WTC11 (cell line): ENCODE measurements at regions of chr10 and their contacts with region 1.

Region 1: GRCh38 chr10:109883859-109884771 is 39.2 kb downstream of the XPNPEP1 start:
- DNase-seq: peak; percentile 84
- ATAC-seq: peak; percentile 94
- H3K4me3 Mint-ChIP-seq: peak overlapping the region; percentile 42
- H3K27ac Mint-ChIP-seq: peak overlapping the region; percentile 94
- H3K4me1 Mint-ChIP-seq: peaks cover 12% of the 10 kb centered on the region
- H3K27me3 Mint-ChIP-seq: no peaks in the 10 kb centered on the region; the same call in 1 of the 2 replicates
- CTCF ChIP-seq: peak; percentile 88

Region 2: GRCh38 chr10:108147346-108147745 is 1736.8 kb before region 1 on chr10:
- CTCF ChIA-PET with region 1: no interaction called
- POLR2A ChIA-PET with region 1: no interaction called
- DNase-seq: no peak
- ATAC-seq: no peak
- H3K4me3 Mint-ChIP-seq: no peak overlapping the region
- H3K27ac Mint-ChIP-seq: no peak overlapping the region
- H3K4me1 Mint-ChIP-seq: peaks cover 17% of the 10 kb centered on the region
- H3K27me3 Mint-ChIP-seq: no peaks in the 10 kb centered on the region; the same call in 1 of the 2 replicates
- CTCF ChIP-seq: no peak

Region 3: GRCh38 chr10:109556399-109556798 is 327.7 kb before region 1 on chr10:
- CTCF ChIA-PET with region 1: no interaction called
- POLR2A ChIA-PET with region 1: no interaction called
- DNase-seq: no peak
- ATAC-seq: peak; percentile 85
- H3K4me3 Mint-ChIP-seq: no peak overlapping the region
- H3K27ac Mint-ChIP-seq: no peak overlapping the region; the same call in 1 of the 2 replicates
- H3K4me1 Mint-ChIP-seq: peaks cover 6% of the 10 kb centered on the region
- H3K27me3 Mint-ChIP-seq: no peaks in the 10 kb centered on the region
- CTCF ChIP-seq: no peak

Region 4: DNA sequence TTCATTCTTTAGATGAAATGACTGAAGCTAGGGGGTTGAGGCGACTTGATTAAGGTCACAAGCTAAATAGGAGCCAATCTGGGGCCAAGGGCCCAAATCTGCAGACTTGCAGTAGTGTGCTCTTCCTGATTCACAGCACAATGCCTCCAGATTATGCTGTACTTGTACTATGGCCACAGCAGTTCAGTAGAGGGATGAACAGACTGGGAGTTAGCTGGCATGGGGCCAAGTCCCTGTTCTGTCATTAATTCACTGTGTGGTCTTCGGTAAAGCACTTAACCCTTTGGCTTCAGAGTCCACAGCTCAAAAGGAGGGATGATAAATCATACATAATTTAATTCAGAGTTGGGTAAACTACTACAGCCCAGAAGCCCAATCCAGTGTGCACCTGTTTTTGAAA is 157.6 kb before region 1 on chr10:
- CTCF ChIA-PET with region 1: no interaction called
- POLR2A ChIA-PET with region 1: no interaction called
- DNase-seq: no peak
- ATAC-seq: no peak
- H3K4me3 Mint-ChIP-seq: no peak overlapping the region
- H3K27ac Mint-ChIP-seq: no peak overlapping the region
- H3K4me1 Mint-ChIP-seq: no peaks in the 10 kb centered on the region
- H3K27me3 Mint-ChIP-seq: no peaks in the 10 kb centered on the region
- CTCF ChIP-seq: no peak

Region 5: GRCh38 chr10:109914966-109915365 is 30.9 kb after region 1 on chr10:
- CTCF ChIA-PET with region 1: interaction called, 12 read pairs
- POLR2A ChIA-PET with region 1: no interaction called
- DNase-seq: no peak
- ATAC-seq: no peak
- H3K4me3 Mint-ChIP-seq: no peak overlapping the region
- H3K27ac Mint-ChIP-seq: no peak overlapping the region
- H3K4me1 Mint-ChIP-seq: peaks cover 39% of the 10 kb centered on the region
- H3K27me3 Mint-ChIP-seq: no peaks in the 10 kb centered on the region
- CTCF ChIP-seq: no peak

Region 6: DNA sequence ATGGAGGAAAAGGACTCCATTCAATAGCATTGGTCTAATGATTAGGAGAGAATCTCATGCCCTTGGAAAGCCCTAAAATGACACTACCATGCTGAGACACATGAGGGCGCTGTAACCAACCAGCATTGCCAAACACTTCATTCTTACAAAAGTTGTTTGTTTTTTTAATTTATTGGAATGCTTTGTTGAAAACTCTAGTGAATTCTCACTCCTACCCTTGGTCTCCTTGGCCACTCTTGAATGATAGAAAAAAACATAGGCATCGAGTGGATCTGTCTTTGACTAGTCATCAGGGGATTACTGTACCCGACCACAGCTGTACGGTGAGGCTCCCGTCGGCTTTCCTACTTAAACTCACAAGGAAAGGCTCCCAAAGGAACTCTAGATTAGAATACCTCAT is 94.4 kb after region 1 on chr10:
- CTCF ChIA-PET with region 1: interaction called, 71 read pairs
- POLR2A ChIA-PET with region 1: no interaction called
- DNase-seq: peak; percentile 74
- ATAC-seq: peak; percentile 79
- H3K4me3 Mint-ChIP-seq: no peak overlapping the region
- H3K27ac Mint-ChIP-seq: no peak overlapping the region
- H3K4me1 Mint-ChIP-seq: peaks cover 39% of the 10 kb centered on the region
- H3K27me3 Mint-ChIP-seq: no peaks in the 10 kb centered on the region
- CTCF ChIP-seq: peak; percentile 80

Region 7: GRCh38 chr10:110016039-110016438 is 131.9 kb after region 1 on chr10:
- CTCF ChIA-PET with region 1: interaction called, 46 read pairs
- POLR2A ChIA-PET with region 1: no interaction called
- DNase-seq: no peak
- ATAC-seq: peak; percentile 85
- H3K4me3 Mint-ChIP-seq: no peak overlapping the region
- H3K27ac Mint-ChIP-seq: peak overlapping the region; percentile 75
- H3K4me1 Mint-ChIP-seq: peaks cover 48% of the 10 kb centered on the region
- H3K27me3 Mint-ChIP-seq: no peaks in the 10 kb centered on the region
- CTCF ChIP-seq: no peak

Region 8: DNA sequence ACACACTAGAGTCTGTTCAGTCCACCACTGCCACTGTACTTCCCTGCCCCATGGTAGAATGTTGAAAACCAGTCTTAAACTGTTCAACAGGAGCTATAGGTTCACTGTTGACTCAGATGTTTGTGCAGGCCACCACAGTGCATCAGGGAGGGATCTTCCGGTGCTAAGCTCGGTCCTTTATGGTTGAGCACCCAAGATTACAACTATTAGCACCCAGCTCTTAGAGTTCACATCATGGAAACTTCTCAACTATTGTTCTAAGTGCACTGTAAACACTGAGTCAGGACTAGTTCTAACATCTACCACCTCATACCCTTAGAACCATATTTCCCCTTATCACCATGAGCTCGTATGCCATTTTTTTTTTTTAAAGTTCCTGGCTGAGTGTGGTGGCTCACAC is 226.2 kb after region 1 on chr10:
- CTCF ChIA-PET with region 1: interaction called, 15 read pairs
- POLR2A ChIA-PET with region 1: no interaction called
- DNase-seq: no peak
- ATAC-seq: no peak
- H3K4me3 Mint-ChIP-seq: no peak overlapping the region
- H3K27ac Mint-ChIP-seq: 0 out of 2 replicates have a peak overlapping the region, but pooled peaks have one; percentile 44
- H3K4me1 Mint-ChIP-seq: no peaks in the 10 kb centered on the region
- H3K27me3 Mint-ChIP-seq: no peaks in the 10 kb centered on the region
- CTCF ChIP-seq: no peak

Region 9: DNA sequence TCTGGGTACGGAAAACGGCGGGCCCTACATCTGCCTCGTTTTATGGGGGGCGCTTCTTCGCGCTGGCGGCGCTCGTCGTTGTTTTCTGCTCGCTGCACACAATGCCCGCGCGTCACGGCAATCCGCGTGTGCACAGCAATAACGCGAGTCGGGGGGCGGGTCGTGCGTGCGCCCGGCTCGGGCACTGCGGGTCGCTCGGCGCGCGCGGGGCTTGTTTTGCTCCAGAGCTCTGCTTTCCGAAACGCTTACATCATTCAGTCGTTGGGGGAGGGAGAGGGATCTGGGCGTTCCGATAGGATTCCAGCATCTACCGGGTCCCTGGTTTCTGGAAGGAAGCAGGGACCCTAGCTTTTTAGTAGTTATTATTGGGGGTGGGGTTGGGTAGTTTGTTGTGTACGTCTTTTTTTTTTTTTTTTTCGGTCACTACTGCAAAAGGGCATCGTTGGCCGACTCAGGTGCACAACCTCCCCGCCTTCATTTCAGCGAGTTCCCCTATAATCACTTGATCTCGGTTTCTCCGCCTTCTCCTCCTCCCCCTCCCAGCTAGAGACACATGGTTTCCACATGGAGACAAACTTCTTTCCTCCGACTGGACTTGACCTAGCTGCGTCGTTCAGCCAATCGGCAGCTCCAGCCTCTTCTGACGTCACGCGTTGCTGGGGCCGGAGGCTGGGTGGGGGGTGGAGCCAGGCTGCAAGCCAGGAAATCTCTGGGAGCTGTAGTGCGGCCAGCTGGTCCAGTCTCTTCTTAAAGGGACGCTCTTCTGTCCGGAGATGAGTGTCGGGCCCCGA is 326.8 kb after region 1 on chr10:
- CTCF ChIA-PET with region 1: interaction called, 17 read pairs
- POLR2A ChIA-PET with region 1: interaction called, 3 read pairs
- DNase-seq: peak; percentile 98
- ATAC-seq: peak; percentile 76
- H3K4me3 Mint-ChIP-seq: peak overlapping the region; percentile 81
- H3K27ac Mint-ChIP-seq: peak overlapping the region; percentile 94
- H3K4me1 Mint-ChIP-seq: peaks cover 40% of the 10 kb centered on the region
- H3K27me3 Mint-ChIP-seq: peaks cover 71% of the 10 kb centered on the region
- CTCF ChIP-seq: no peak